Ascending aorta (tissue), 2 donors: ENCODE measurements at regions of chr5 and their contacts with region 1.

Region 1: GRCh38 chr5:82165740-82166530 is 112.2 kb downstream of the RPS23 start:
- DNase-seq: peak in 1 of 2 donors; percentile 83
- H3K4me3 ChIP-seq: no peak overlapping the region
- H3K27ac ChIP-seq: peak overlapping the region; percentile 0 to 36
- H3K4me1 ChIP-seq: peaks cover 2 to 9% of the 10 kb centered on the region in 2 donors
- H3K27me3 ChIP-seq: no peaks in the 10 kb centered on the region
- CTCF ChIP-seq: peak; percentile 65 to 75 (median 73)

Region 2: GRCh38 chr5:81425569-81425968 is 740.4 kb before region 1 on chr5:
- intact Hi-C with region 1: loop called (anchors 1 kb)
- DNase-seq: no peak
- H3K4me3 ChIP-seq: no peak overlapping the region
- H3K27ac ChIP-seq: peak overlapping the region; percentile 22 to 51
- H3K4me1 ChIP-seq: peaks cover 0 to 6% of the 10 kb centered on the region in 2 donors
- H3K27me3 ChIP-seq: no peaks in the 10 kb centered on the region
- CTCF ChIP-seq: peak; percentile 41 to 62 (median 54)

Region 3: DNA sequence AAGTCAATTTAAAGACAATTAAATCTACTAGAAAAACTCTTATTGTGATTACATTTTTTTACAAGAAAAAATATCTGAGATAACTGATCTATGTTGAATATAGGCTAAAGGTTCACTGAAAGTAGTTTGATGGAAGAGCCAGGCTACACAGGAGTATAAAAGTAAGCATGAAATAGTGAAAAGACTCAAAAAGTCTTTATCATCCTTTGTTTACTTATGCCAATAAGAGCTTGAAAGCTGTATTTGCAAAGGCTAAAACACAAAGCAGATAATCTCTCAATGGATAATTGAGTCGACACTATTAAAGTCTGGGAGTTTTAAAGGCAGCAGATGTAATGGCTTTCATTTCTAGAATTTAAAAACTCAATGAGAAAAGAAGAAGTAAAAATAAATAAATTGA is 457.0 kb before region 1 on chr5:
- intact Hi-C with region 1: no loop called
- DNase-seq: no peak
- H3K4me3 ChIP-seq: no peak overlapping the region
- H3K27ac ChIP-seq: no peak overlapping the region
- H3K4me1 ChIP-seq: peaks cover 0 to 3% of the 10 kb centered on the region in 2 donors
- H3K27me3 ChIP-seq: no peaks in the 10 kb centered on the region
- CTCF ChIP-seq: no peak

Region 4: DNA sequence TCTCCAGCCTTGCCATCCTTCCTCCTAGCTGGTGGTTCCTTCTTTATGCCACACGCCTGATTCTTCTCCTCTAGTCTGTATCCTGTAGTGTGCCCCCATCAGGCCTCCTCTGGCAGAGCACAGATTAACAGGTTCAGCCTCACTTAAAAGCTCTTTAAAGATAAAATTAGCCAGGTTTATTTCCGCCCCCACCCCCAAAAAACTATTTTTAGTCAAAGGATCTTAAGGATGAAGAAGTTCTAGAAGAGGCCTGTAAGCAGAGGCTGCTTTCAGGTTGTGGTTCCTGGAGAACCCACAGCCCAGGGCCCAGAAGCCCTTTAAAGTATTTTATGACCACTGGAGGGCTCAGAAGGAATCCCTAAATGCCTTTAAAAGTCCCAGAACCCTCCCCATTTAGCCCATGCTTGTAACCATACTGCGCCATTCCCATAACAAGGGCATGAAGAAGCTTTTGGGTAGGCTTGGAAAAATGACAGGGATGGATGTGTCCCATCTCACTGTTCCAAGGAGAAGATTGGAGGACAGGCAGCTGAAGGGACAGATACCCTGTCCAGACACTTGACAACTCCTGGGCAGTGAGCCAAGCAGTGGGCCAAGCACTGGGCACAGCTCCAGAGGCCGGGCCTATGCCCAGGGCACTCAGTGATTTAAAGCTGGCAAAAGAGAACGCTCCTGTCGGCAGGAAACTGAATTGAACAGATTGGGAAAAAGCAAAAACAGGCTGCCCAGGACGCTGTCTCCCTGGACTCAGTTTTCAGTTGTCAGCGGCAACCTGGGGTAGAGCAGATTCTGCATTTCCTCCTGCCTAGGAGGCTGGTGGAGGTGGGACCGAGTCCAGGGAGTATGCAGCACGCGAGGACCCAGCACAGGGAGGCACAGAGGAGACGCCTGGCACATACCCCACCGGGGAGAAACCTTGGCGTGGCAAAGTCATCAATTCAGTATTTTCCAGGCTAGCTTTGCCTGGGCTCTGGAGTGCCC is 308.7 kb before region 1 on chr5:
- intact Hi-C with region 1: loop called (anchors 2 kb)
- DNase-seq: peak in 1 of 2 donors; percentile 85
- H3K4me3 ChIP-seq: peak overlapping the region in 1 of 2 donors; percentile 38
- H3K27ac ChIP-seq: peak overlapping the region; percentile 71 to 90
- H3K4me1 ChIP-seq: peaks cover 5 to 17% of the 10 kb centered on the region in 2 donors
- H3K27me3 ChIP-seq: no peaks in the 10 kb centered on the region
- CTCF ChIP-seq: peak in 2 of 3 experiments; percentile 20 to 30